ENCODE measurements at regions of chr13 and their contacts with region 1.

Region 1: GRCh38 chr13:75691183-75691582 is 55.1 kb downstream of the LMO7 start:
- DNase-seq: no peak
- ATAC-seq: no peak
- H3K4me3 Mint-ChIP-seq: no peak overlapping the region
- H3K27ac Mint-ChIP-seq: no peak overlapping the region
- H3K4me1 Mint-ChIP-seq: no peaks in the 10 kb centered on the region
- H3K27me3 Mint-ChIP-seq: no peaks in the 10 kb centered on the region
- CTCF ChIP-seq: no peak

Region 2: DNA sequence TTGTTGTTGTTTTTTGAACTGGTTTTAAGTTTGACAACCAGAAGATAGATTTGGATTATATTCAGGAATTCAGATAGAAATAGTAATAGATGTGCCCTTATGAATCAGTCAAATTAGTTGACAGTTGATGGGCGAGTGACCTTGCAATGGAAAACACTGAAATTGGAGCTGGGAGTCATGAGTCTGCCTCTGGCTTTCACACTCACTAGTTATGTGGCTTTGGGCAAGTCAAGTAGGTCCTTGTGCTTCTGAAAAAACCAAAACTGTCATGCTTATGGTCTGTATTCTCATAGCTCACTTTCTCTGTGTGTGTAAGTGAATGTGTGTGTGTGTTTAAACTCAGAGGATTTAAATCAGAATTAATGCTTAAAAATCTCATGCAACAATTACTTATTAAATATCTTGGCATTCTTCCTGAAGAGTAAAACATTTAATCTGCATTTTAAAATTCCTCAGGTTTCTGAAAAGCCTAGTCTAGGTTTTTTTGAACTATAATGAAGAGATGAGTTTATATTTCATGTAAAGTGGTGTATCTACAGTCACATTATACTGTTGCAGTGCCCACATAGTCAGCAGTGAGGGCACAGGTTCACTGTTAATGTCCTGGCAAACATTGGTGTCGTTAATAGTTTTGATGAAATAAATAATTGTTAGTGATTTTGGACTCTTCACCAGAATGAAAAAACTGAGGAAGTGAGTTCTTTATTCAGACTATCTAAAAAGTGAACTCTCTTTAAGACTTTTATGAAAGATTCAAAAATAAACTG is 109.1 kb before region 1 on chr13:
- CTCF ChIA-PET with region 1: no interaction called
- POLR2A ChIA-PET with region 1: no interaction called
- intact Hi-C with region 1: no loop called
- DNase-seq: no peak
- ATAC-seq: no peak
- H3K4me3 Mint-ChIP-seq: no peak overlapping the region
- H3K27ac Mint-ChIP-seq: no peak overlapping the region
- H3K4me1 Mint-ChIP-seq: no peaks in the 10 kb centered on the region
- H3K27me3 Mint-ChIP-seq: no peaks in the 10 kb centered on the region
- CTCF ChIP-seq: no peak

Region 3: GRCh38 chr13:75635828-75636435 is 55.3 kb before region 1 on chr13 and contains the start of gene LMO7:
- CTCF ChIA-PET with region 1: no interaction called
- POLR2A ChIA-PET with region 1: interaction called, 12 read pairs
- intact Hi-C with region 1: no loop called
- DNase-seq: peak; percentile 61
- ATAC-seq: peak; percentile 68
- H3K4me3 Mint-ChIP-seq: peak within 1 kb of the TSS; percentile 83
- H3K27ac Mint-ChIP-seq: no peak within 1 kb of the TSS
- H3K4me1 Mint-ChIP-seq: peaks cover 12% of the 10 kb centered on the region
- H3K27me3 Mint-ChIP-seq: no peaks in the 10 kb centered on the region
- CTCF ChIP-seq: no peak
- total RNA-seq, gene LMO7: 13.5 and 19.5 TPM in 2 replicates

Region 4: GRCh38 chr13:75675421-75675820 is 15.8 kb before region 1 on chr13:
- CTCF ChIA-PET with region 1: interaction called, 16 read pairs
- POLR2A ChIA-PET with region 1: no interaction called
- intact Hi-C with region 1: no loop called
- DNase-seq: no peak
- ATAC-seq: no peak
- H3K4me3 Mint-ChIP-seq: no peak overlapping the region
- H3K27ac Mint-ChIP-seq: no peak overlapping the region
- H3K4me1 Mint-ChIP-seq: no peaks in the 10 kb centered on the region
- H3K27me3 Mint-ChIP-seq: no peaks in the 10 kb centered on the region
- CTCF ChIP-seq: no peak

Region 5: GRCh38 chr13:75870397-75870903 is 179.3 kb after region 1 on chr13:
- CTCF ChIA-PET with region 1: interaction called, 12 read pairs
- POLR2A ChIA-PET with region 1: no interaction called
- intact Hi-C with region 1: loop called (anchors 1 kb)
- DNase-seq: no peak
- ATAC-seq: no peak
- H3K4me3 Mint-ChIP-seq: peak overlapping the region; percentile 25
- H3K27ac Mint-ChIP-seq: no peak overlapping the region
- H3K4me1 Mint-ChIP-seq: peaks cover 2% of the 10 kb centered on the region
- H3K27me3 Mint-ChIP-seq: peaks cover 13% of the 10 kb centered on the region
- CTCF ChIP-seq: no peak

Region 6: DNA sequence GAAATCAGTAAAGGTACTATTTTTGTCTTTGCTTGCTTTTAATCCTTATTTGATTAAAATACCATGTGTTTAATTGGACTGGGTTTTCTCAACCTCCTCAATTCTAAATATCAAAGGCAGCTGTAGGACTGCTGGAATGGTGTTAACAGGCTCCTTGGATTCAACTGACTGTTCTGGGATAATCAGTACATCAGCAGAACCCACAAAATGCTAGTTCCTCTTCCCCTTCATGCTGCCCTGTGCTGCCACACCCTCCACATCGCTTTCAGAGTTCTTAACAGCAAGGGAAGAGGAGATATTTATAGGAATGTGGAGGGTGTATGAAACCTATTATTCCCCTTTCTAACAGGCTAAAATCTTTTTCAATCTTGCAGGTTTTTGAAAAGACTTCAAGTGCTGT is 1112.6 kb after region 1 on chr13:
- CTCF ChIA-PET with region 1: no interaction called
- POLR2A ChIA-PET with region 1: no interaction called
- intact Hi-C with region 1: no loop called
- DNase-seq: no peak
- ATAC-seq: no peak
- H3K4me3 Mint-ChIP-seq: no peak overlapping the region
- H3K27ac Mint-ChIP-seq: no peak overlapping the region
- H3K4me1 Mint-ChIP-seq: peaks cover 2% of the 10 kb centered on the region
- H3K27me3 Mint-ChIP-seq: no peaks in the 10 kb centered on the region
- CTCF ChIP-seq: no peak

Region 7: GRCh38 chr13:76980075-76980718 is 1289.0 kb after region 1 on chr13:
- CTCF ChIA-PET with region 1: interaction called, 4 read pairs
- POLR2A ChIA-PET with region 1: no interaction called
- intact Hi-C with region 1: loop called (anchors 5 kb)
- DNase-seq: peak; percentile 84
- ATAC-seq: peak; percentile 100
- H3K4me3 Mint-ChIP-seq: peak overlapping the region; percentile 64
- H3K27ac Mint-ChIP-seq: no peak overlapping the region
- H3K4me1 Mint-ChIP-seq: peaks cover 2% of the 10 kb centered on the region
- H3K27me3 Mint-ChIP-seq: peaks cover 22% of the 10 kb centered on the region
- CTCF ChIP-seq: peak; percentile 96

Measured in activated B cell treated with CpG ODN at 0.5 μM for 24 hours (primary cell).